Endothelial cell of umbilical vein (primary cell): ENCODE measurements at regions of chr3 and their contacts with region 1.

Region 1: DNA sequence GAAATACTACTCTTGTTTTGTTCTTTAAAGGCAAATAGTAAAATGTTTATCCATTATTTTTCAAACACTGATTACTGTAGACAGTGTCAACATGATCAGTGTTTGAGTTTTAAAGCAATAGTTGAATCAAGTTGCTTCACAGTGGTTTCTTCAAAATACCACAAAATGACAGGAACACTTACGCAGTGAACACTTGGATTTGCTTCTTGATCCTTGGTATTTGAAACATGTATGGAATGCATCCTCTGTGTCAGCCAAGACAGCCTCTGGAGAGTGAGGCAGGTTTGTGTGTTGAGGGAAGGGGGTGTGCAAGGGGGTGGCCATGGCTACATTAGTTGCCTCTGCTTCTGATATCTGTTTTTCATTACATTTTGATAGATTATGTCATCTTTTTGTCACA is 413.0 kb downstream of the RBMS3 start:
- DNase-seq: peak; percentile 78
- H3K4me3 ChIP-seq: no peak overlapping the region
- H3K27ac ChIP-seq: peak overlapping the region; percentile 98
- H3K4me1 ChIP-seq: peaks cover 34% of the 10 kb centered on the region
- H3K27me3 ChIP-seq: no peaks in the 10 kb centered on the region
- CTCF ChIP-seq: no peak
- POLR2A ChIP-seq: no peak

Region 2: DNA sequence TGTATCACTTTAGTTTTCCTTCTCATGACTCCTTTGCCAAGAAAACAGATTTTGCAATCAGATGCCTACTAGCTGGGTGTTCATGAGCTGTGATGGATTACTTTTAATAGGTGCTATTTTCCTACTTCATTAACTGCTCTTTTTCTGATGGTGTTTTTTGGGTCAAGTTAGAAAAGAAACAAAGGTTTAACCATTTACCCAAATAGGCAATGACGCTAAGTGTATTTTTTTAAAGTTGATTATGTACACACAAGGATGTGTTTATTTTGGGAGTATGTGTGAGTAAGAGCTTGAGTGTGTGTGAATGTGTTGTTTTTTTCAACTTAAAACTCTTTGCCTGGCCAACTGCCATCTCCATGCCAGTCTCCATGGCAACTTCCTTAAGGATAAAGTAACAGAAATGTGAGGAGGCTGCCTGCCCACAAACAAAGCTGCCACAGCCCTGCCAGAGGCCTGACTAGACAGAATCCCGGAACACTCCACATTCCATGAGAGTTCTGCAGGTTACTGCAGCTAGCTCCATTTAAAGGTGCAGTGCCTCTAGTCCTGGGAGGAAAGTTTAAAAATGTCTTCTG is 628.6 kb before region 1 on chr3:
- CTCF ChIA-PET with region 1: no interaction called
- POLR2A ChIA-PET with region 1: no interaction called
- dilution Hi-C with region 1: no loop called
- intact Hi-C with region 1: loop called (anchors 5 kb)
- DNase-seq: peak; percentile 100
- H3K4me3 ChIP-seq: no peak overlapping the region
- H3K27ac ChIP-seq: peak overlapping the region; percentile 71
- H3K4me1 ChIP-seq: peaks cover 17% of the 10 kb centered on the region
- H3K27me3 ChIP-seq: no peaks in the 10 kb centered on the region
- CTCF ChIP-seq: no peak
- POLR2A ChIP-seq: no peak

Region 3: GRCh38 chr3:29335438-29335837 is 358.4 kb before region 1 on chr3:
- CTCF ChIA-PET with region 1: no interaction called
- POLR2A ChIA-PET with region 1: no interaction called
- dilution Hi-C with region 1: no loop called
- intact Hi-C with region 1: loop called (anchors 5 kb)
- DNase-seq: peak; percentile 92
- H3K4me3 ChIP-seq: peak overlapping the region in 2 of 3 experiments; percentile 19 to 42
- H3K27ac ChIP-seq: peak overlapping the region; percentile 76
- H3K4me1 ChIP-seq: peaks cover 40% of the 10 kb centered on the region
- H3K27me3 ChIP-seq: no peaks in the 10 kb centered on the region
- CTCF ChIP-seq: no peak
- POLR2A ChIP-seq: no peak

Region 4: DNA sequence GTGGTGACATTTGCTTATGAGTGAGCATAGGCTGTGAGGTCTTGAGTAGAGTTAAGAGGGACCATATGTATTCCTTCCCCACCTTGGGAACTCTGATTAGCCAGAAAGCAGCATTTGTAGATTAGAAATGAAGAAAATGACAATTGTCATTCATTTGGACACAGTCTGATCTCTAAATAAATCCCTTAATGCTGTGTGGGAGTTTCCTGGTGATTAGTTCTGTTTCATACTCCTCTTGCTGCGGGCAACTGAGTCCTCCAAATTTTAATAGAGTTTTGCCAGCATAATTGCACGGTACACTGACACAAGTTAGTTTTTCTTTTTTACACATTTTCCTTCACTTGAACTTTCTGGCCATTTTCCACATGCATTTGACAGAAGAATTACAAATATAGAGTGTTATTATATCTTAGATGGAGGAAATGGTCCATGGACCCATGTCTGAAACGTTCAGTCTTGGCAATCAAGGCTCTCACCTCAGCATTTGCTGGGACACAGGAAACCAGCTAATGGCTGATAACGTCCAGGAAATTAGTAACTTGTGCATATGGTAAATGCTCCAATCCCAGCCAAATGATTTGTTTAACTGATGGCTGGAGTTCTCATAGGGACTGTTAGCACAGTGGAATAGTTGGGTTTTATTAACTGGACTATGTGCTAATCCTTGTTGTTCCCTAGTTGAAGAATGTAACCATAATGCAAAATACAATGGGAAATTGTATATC is 91.8 kb before region 1 on chr3:
- CTCF ChIA-PET with region 1: no interaction called
- POLR2A ChIA-PET with region 1: interaction called, 3 read pairs
- dilution Hi-C with region 1: no loop called
- intact Hi-C with region 1: loop called (anchors 2 kb)
- DNase-seq: peak; percentile 97
- H3K4me3 ChIP-seq: no peak overlapping the region
- H3K27ac ChIP-seq: peak overlapping the region; percentile 79
- H3K4me1 ChIP-seq: peaks cover 19% of the 10 kb centered on the region
- H3K27me3 ChIP-seq: no peaks in the 10 kb centered on the region
- CTCF ChIP-seq: no peak
- POLR2A ChIP-seq: peak; percentile 58

Region 5: DNA sequence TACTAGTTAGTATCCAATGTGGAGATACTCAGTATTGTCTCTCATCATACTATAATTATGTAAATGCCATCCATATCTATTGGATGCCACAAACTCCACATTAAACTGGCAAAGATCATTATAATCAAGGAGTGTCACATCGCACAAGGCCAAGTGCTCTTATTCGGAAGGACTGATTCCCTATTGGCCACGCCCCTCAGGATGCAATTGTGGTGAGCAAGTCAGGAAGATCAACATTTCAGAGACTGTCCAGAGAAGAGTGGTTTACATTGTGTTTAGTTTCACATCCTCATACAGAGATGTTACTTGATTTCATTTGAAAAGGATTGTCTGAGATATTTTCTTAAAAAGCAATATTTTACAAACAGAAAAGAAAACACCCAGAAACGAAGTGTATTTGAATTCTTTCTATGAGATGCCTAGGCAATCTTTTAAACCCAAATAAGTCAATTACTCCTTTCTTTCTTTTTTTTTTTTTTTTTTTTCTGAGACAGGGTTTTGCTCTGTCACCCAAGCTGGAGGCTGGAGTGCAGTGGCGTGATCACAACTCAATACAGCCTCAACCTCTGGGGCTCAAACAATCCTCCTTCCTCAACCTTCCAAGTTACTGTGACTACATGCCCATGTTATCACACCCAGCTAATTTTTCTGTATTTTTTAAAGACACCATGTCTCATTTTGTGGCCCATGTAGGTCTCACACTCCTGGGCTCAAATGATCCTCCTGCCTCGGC is 43.9 kb before region 1 on chr3:
- CTCF ChIA-PET with region 1: no interaction called
- POLR2A ChIA-PET with region 1: no interaction called
- dilution Hi-C with region 1: no loop called
- intact Hi-C with region 1: no loop called
- DNase-seq: peak; percentile 61
- H3K4me3 ChIP-seq: no peak overlapping the region
- H3K27ac ChIP-seq: no peak overlapping the region
- H3K4me1 ChIP-seq: peaks cover 10% of the 10 kb centered on the region
- H3K27me3 ChIP-seq: no peaks in the 10 kb centered on the region
- CTCF ChIP-seq: no peak
- POLR2A ChIP-seq: no peak

Region 6: GRCh38 chr3:29683018-29683993 is 10.6 kb before region 1 on chr3:
- CTCF ChIA-PET with region 1: interaction called, 4 read pairs
- POLR2A ChIA-PET with region 1: no interaction called
- dilution Hi-C with region 1: no loop called
- intact Hi-C with region 1: loop called (anchors 1 kb)
- DNase-seq: peak; percentile 92
- H3K4me3 ChIP-seq: no peak overlapping the region
- H3K27ac ChIP-seq: peak overlapping the region; percentile 94
- H3K4me1 ChIP-seq: peaks cover 40% of the 10 kb centered on the region
- H3K27me3 ChIP-seq: no peaks in the 10 kb centered on the region
- CTCF ChIP-seq: no peak
- POLR2A ChIP-seq: peak; percentile 47